Ascending aorta (tissue), 2 donors: ENCODE measurements at regions of chr5 and their contacts with region 1.

Region 1: DNA sequence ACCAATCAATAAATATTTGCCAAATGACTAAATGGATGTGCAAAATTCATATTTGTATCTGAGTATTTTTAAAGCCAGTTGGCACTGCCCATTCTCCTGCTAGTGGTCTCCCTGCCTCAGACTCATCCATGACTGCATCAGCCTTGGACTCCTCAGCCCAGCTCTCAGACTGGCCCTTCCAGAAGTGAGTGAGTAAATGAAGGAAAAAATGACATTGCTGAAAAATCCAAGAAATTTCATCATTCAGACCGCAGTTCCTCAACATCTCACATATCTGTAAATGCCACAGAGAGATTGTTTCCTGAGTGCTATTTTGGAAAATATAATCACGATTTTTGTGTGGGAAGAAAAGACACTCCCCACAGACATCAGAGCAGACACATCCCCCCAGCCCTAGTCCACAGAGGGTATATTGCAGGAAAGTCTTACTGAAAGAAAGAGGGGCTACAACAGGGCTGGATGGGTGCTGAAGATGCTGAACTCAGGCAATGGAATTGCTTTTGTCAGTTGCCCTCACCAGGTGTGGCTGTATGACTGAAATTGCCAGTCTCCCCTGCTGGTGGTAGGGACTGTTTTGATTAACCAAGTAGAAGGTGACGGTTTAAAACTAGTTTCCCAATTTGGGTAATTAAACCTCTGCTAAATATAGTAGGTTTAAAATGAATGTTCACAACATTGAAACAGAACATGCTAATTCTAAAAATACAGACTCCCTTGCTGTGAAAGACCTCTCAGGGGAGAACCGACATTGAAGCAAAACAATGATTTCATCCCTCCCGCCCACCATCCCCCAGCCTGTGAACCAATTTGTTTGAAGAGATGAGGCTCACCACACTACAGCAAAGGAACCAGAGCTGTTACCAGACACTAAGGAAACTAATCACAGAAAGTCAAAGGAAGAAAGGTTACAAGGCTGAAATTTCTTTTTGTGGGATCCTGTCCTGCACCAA is 158.8 kb downstream of the DEPDC1B start:
- DNase-seq: peak in 1 of 2 donors; percentile 86
- H3K4me3 ChIP-seq: no peak overlapping the region
- H3K27ac ChIP-seq: peak overlapping the region; percentile 73 to 79
- H3K4me1 ChIP-seq: peaks cover 6 to 32% of the 10 kb centered on the region in 2 donors
- H3K27me3 ChIP-seq: no peaks in the 10 kb centered on the region
- CTCF ChIP-seq: no peak

Region 2: GRCh38 chr5:60285910-60286309 is 255.2 kb before region 1 on chr5:
- intact Hi-C with region 1: no loop called
- DNase-seq: no peak
- H3K4me3 ChIP-seq: peak overlapping the region in 1 of 2 donors; percentile 30
- H3K27ac ChIP-seq: peak overlapping the region; percentile 20 to 55
- H3K4me1 ChIP-seq: no peaks in the 10 kb centered on the region
- H3K27me3 ChIP-seq: no peaks in the 10 kb centered on the region
- CTCF ChIP-seq: no peak

Region 3: DNA sequence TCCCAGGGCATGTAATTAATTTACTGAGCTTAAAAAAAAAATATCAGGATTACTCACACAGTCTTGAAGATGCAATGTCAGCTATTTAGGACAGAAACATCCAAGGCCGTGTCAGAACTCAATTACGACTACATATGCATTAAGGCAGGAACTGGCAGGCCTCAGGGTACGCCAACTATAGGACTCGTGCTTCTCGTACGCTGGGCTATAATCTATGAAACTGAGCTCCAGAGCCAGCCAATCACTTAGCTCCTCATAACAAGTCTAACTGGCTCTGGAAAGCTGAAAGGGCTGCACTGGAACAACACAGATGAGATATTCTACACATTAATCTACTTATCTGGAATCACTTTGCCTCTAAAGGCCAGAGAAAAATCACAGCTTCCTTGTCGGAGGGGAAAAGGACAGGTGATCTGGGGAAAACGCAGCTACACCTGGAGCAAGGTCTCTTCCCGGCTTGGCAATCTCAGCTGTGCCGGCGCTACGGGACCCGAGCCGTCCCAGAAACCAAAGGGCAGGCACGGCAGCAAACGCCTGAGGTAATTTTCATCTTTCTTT is 53.2 kb before region 1 on chr5:
- intact Hi-C with region 1: loop called (anchors 2 kb)
- DNase-seq: no peak
- H3K4me3 ChIP-seq: peak overlapping the region; percentile 40 to 69
- H3K27ac ChIP-seq: peak overlapping the region; percentile 67 to 84
- H3K4me1 ChIP-seq: peaks cover 0 to 4% of the 10 kb centered on the region in 2 donors
- H3K27me3 ChIP-seq: no peaks in the 10 kb centered on the region
- CTCF ChIP-seq: no peak

Region 4: GRCh38 chr5:60586307-60586901 is 45.3 kb after region 1 on chr5:
- intact Hi-C with region 1: loop called (anchors 5 kb)
- DNase-seq: no peak
- H3K4me3 ChIP-seq: no peak overlapping the region
- H3K27ac ChIP-seq: no peak overlapping the region
- H3K4me1 ChIP-seq: no peaks in the 10 kb centered on the region
- H3K27me3 ChIP-seq: no peaks in the 10 kb centered on the region
- CTCF ChIP-seq: peak; percentile 6 to 57 (median 54)

Region 5: GRCh38 chr5:60649283-60649917 is 108.3 kb after region 1 on chr5:
- intact Hi-C with region 1: loop called (anchors 5 kb)
- DNase-seq: no peak
- H3K4me3 ChIP-seq: no peak overlapping the region
- H3K27ac ChIP-seq: no peak overlapping the region
- H3K4me1 ChIP-seq: no peaks in the 10 kb centered on the region
- H3K27me3 ChIP-seq: no peaks in the 10 kb centered on the region
- CTCF ChIP-seq: peak; percentile 7 to 62 (median 49)